Caco-2 (cell line): ENCODE measurements at regions of chr11 and their contacts with region 1.

Region 1: DNA sequence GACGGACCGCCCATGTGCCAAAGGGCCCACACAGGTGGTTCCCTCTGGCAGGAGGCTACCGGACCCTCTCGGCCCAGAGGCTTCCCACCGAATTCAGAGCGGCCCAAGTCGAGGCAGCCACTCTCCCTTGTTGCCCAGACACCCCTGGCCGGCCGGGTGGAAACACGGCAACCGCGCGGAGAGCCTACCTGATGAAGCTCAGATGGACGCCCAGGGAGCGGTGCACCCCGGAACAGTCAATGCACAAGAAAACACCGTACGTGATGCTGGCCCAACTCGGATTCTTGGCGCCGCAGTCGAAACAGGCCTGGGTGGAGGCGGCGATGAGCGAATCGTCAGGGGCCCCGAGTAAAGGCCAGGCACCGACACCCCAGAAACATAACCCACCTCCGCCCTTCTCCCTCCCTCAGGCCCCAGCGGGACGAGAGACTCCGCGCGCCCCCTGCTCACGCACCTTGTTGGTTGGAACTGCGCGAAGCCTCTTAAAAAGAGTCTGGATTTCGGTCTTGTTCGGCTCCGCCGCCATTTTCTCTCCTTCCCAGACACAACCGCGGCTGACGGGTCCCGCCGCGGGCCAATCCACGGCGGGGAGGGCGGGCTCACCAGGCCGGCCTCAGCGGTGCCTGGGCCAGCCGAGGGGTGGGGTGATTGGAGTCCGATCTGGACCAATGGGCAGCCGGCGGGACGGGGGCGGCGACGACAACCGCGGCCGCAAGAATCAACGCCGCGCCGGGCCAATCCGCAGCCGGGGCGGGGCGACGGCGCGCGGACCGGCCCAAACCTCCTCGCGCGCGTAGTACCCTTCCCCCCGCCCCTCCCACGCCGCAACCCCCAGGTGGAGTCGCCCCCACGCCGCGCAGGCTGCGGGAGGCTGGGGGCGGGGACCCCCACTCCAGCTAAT is at the start of gene ARFGAP2:
- DNase-seq: peak; percentile 96 to 98
- H3K4me3 ChIP-seq: peak within 1 kb of the TSS; percentile 99
- H3K4me3 Mint-ChIP-seq: peak within 1 kb of the TSS; percentile 87
- H3K27ac Mint-ChIP-seq: peak within 1 kb of the TSS; percentile 99
- H3K4me1 ChIP-seq: peaks cover 8% of the 10 kb centered on the region; the same call in 1 of the 2 replicates
- H3K4me1 Mint-ChIP-seq: peaks cover 20% of the 10 kb centered on the region
- H3K27me3 ChIP-seq: no peaks in the 10 kb centered on the region
- H3K27me3 Mint-ChIP-seq: no peaks in the 10 kb centered on the region
- CTCF ChIP-seq: no peak
- total RNA-seq, gene ARFGAP2: 99.9 and 100.0 TPM in 2 replicates

Region 2: GRCh38 chr11:47152953-47153950 is 23.3 kb before region 1 on chr11:
- CTCF ChIA-PET with region 1: no interaction called
- POLR2A ChIA-PET with region 1: no interaction called
- intact Hi-C with region 1: no loop called
- DNase-seq: peak; percentile 79 to 89
- H3K4me3 ChIP-seq: no peak overlapping the region
- H3K4me3 Mint-ChIP-seq: no peak overlapping the region
- H3K27ac Mint-ChIP-seq: no peak overlapping the region
- H3K4me1 ChIP-seq: no peaks in the 10 kb centered on the region
- H3K4me1 Mint-ChIP-seq: peaks cover 3% of the 10 kb centered on the region
- H3K27me3 ChIP-seq: no peaks in the 10 kb centered on the region
- H3K27me3 Mint-ChIP-seq: no peaks in the 10 kb centered on the region
- CTCF ChIP-seq: peak; percentile 96 to 98

Region 3: GRCh38 chr11:47213985-47214564 is 37.5 kb after region 1 on chr11:
- CTCF ChIA-PET with region 1: interaction called, 13 read pairs
- POLR2A ChIA-PET with region 1: interaction called, 7 read pairs
- intact Hi-C with region 1: loop called (anchors 5 kb)
- DNase-seq: peak; percentile 89
- H3K4me3 ChIP-seq: peak overlapping the region; percentile 73
- H3K4me3 Mint-ChIP-seq: peak overlapping the region; percentile 79
- H3K27ac Mint-ChIP-seq: peak overlapping the region; percentile 88
- H3K4me1 ChIP-seq: peaks cover 17% of the 10 kb centered on the region
- H3K4me1 Mint-ChIP-seq: peaks cover 22% of the 10 kb centered on the region
- H3K27me3 ChIP-seq: no peaks in the 10 kb centered on the region
- H3K27me3 Mint-ChIP-seq: no peaks in the 10 kb centered on the region
- CTCF ChIP-seq: no peak

Region 4: DNA sequence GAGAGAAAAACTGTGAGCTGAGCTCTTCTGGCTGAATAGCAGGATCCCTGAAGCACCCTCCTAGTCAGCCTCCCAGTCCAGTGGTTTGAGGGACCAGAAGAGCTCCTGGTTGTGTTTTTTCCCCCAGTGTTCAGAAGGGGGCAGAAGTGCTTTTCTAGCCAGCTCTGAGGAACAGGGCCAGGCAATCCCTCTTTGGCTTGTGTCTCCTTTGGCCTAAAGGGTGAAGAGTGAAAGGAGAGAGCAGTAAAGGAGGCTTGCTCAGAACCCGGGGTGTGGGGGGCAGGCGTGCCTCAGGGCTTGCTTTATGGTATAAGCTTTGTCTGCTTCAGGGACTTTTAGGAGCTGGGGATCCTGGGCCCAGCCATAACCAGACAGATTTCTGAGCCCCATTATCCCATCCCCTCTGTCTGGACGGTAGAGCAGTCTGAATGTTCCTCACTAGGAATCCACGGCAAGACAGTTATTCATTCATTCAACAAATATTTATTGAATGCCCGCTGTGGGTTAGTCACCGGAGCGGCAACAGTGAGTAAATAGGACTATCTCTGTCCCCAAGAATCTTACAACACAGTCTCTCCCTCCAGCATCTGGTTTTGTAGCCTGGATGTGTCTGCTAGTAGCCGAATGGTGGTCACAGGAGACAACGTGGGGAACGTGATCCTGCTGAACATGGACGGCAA is 57.6 kb after region 1 on chr11:
- CTCF ChIA-PET with region 1: interaction called, 6 read pairs
- POLR2A ChIA-PET with region 1: no interaction called
- intact Hi-C with region 1: loop called (anchors 5 kb)
- DNase-seq: peak in 1 of 2 experiments; percentile 49
- H3K4me3 ChIP-seq: no peak overlapping the region
- H3K4me3 Mint-ChIP-seq: no peak overlapping the region
- H3K27ac Mint-ChIP-seq: peak overlapping the region; percentile 47
- H3K4me1 ChIP-seq: peaks cover 19% of the 10 kb centered on the region
- H3K4me1 Mint-ChIP-seq: peaks cover 12% of the 10 kb centered on the region
- H3K27me3 ChIP-seq: no peaks in the 10 kb centered on the region
- H3K27me3 Mint-ChIP-seq: no peaks in the 10 kb centered on the region
- CTCF ChIP-seq: peak; percentile 22 to 50

Region 5: GRCh38 chr11:47269002-47269828 is 92.6 kb after region 1 on chr11:
- CTCF ChIA-PET with region 1: no interaction called
- POLR2A ChIA-PET with region 1: no interaction called
- intact Hi-C with region 1: loop called (anchors 2 kb)
- DNase-seq: peak; percentile 93 to 94
- H3K4me3 ChIP-seq: peak overlapping the region; percentile 92
- H3K4me3 Mint-ChIP-seq: peak overlapping the region; percentile 66
- H3K27ac Mint-ChIP-seq: peak overlapping the region; percentile 93
- H3K4me1 ChIP-seq: peaks cover 28% of the 10 kb centered on the region
- H3K4me1 Mint-ChIP-seq: peaks cover 28% of the 10 kb centered on the region
- H3K27me3 ChIP-seq: no peaks in the 10 kb centered on the region
- H3K27me3 Mint-ChIP-seq: no peaks in the 10 kb centered on the region
- CTCF ChIP-seq: peak in 1 of 2 experiments; percentile 16

Region 6: GRCh38 chr11:47355283-47356128 is 178.9 kb after region 1 on chr11:
- CTCF ChIA-PET with region 1: interaction called, 5 read pairs
- POLR2A ChIA-PET with region 1: no interaction called
- intact Hi-C with region 1: loop called (anchors 1 kb)
- DNase-seq: peak; percentile 96 to 97
- H3K4me3 ChIP-seq: peak overlapping the region; percentile 23
- H3K4me3 Mint-ChIP-seq: no peak overlapping the region
- H3K27ac Mint-ChIP-seq: no peak overlapping the region
- H3K4me1 ChIP-seq: peaks cover 4% of the 10 kb centered on the region; the same call in 1 of the 2 replicates
- H3K4me1 Mint-ChIP-seq: no peaks in the 10 kb centered on the region
- H3K27me3 ChIP-seq: no peaks in the 10 kb centered on the region
- H3K27me3 Mint-ChIP-seq: no peaks in the 10 kb centered on the region
- CTCF ChIP-seq: peak; percentile 97 to 100